K562 (cell line): ENCODE measurements at regions of chr19 and their contacts with region 1.

Region 1: GRCh38 chr19:50537762-50538230 is 24.1 kb upstream of the ASPDH start:
- DNase-seq: peak; percentile 87 to 93 (median 88)
- ATAC-seq: peak; percentile 99
- H3K4me3 ChIP-seq: no peak overlapping the region
- H3K27ac ChIP-seq: no peak overlapping the region
- H3K4me1 ChIP-seq: peaks cover 0 to 5% of the 10 kb centered on the region in 2 experiments; a peak in 2 of 5 replicates
- H3K27me3 ChIP-seq: peaks cover 0 to under 1% of the 10 kb centered on the region in 2 experiments; a peak in 1 of 5 replicates
- CTCF ChIP-seq: peak; percentile 97 to 99 (median 98)
- EP300 ChIP-seq: no peak
- POLR2A ChIP-seq: no peak
- RAD21 ChIP-seq: peak; percentile 85 to 96

Region 2: GRCh38 chr19:50556282-50557008 is 18.6 kb after region 1 on chr19:
- CTCF ChIA-PET with region 1: interaction called, 4 read pairs
- POLR2A ChIA-PET with region 1: interaction called, 3 read pairs
- in situ Hi-C with region 1: no loop called
- intact Hi-C with region 1: loop called (anchors 1 kb)
- DNase-seq: peak; percentile 91 to 93 (median 92)
- ATAC-seq: peak; percentile 95
- H3K4me3 ChIP-seq: peak overlapping the region; percentile 54
- H3K27ac ChIP-seq: peak overlapping the region; percentile 38; the same call in 2 of the 3 replicates
- H3K4me1 ChIP-seq: peaks cover 18 to 33% of the 10 kb centered on the region in 2 experiments
- H3K27me3 ChIP-seq: peaks cover 0 to 13% of the 10 kb centered on the region in 2 experiments; a peak in 2 of 5 replicates
- CTCF ChIP-seq: peak; percentile 82 to 98 (median 95)
- EP300 ChIP-seq: no peak
- POLR2A ChIP-seq: no peak; the same call in 1 of the 2 replicates
- RAD21 ChIP-seq: peak; percentile 19 to 57; a peak in 2 of 4 replicates

Region 3: DNA sequence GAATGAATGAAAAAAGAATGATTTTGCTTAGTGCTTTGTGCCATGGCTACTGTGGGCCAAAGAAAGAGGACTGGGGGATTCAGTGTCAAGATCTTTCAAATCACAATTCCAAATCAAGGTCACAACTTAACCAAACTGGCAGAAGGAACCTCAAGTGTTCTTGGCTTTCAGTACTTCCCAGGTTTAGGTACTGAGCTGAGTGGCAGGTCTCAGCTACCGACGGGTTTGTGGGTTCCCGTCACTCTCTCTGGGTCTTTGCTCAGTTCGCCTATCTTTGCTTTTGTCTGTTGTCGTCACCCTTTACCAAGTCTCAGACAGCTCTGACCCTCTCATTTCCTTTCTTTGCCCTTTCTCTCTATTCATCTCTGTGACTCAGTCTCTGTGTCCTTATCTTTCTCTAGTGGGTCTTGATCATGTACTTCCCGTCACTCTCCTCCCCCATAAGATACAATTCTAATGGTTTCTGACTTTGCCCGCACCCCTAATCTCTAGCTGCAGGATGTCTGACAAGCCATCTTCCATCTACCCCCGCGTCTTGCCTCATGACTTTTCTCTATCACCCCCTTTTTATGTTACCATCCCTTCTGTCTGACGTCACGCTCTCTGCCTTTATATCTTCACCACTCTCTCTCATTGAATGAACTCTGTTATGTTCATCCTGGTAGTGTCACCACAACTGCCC is 63.8 kb after region 1 on chr19:
- CTCF ChIA-PET with region 1: no interaction called
- POLR2A ChIA-PET with region 1: no interaction called
- in situ Hi-C with region 1: no loop called
- intact Hi-C with region 1: loop called (anchors 5 kb)
- DNase-seq: peak; percentile 75 to 94 (median 82)
- ATAC-seq: peak; percentile 67
- H3K4me3 ChIP-seq: no peak overlapping the region
- H3K27ac ChIP-seq: peak overlapping the region; percentile 77
- H3K4me1 ChIP-seq: peaks cover 28 to 39% of the 10 kb centered on the region in 2 experiments
- H3K27me3 ChIP-seq: no peaks in the 10 kb centered on the region
- CTCF ChIP-seq: no peak
- EP300 ChIP-seq: peak; percentile 97
- POLR2A ChIP-seq: no peak
- RAD21 ChIP-seq: peak; percentile 16 to 29; a peak in 1 of 4 replicates

Region 4: GRCh38 chr19:50657712-50658440 is 120.1 kb after region 1 on chr19:
- CTCF ChIA-PET with region 1: interaction called, 5 read pairs
- POLR2A ChIA-PET with region 1: no interaction called
- in situ Hi-C with region 1: no loop called
- intact Hi-C with region 1: loop called (anchors 1 kb)
- DNase-seq: peak; percentile 96 to 100 (median 98)
- ATAC-seq: peak; percentile 88
- H3K4me3 ChIP-seq: peak overlapping the region; percentile 66
- H3K27ac ChIP-seq: peak overlapping the region; percentile 98
- H3K4me1 ChIP-seq: peaks cover 20 to 51% of the 10 kb centered on the region in 2 experiments
- H3K27me3 ChIP-seq: no peaks in the 10 kb centered on the region; a peak in 1 of 5 replicates
- CTCF ChIP-seq: no peak; a peak in 1 of 6 replicates
- EP300 ChIP-seq: no peak; the same call in 1 of the 2 replicates
- POLR2A ChIP-seq: peak; percentile 82; the same call in 1 of the 2 replicates
- RAD21 ChIP-seq: no peak

Region 5: DNA sequence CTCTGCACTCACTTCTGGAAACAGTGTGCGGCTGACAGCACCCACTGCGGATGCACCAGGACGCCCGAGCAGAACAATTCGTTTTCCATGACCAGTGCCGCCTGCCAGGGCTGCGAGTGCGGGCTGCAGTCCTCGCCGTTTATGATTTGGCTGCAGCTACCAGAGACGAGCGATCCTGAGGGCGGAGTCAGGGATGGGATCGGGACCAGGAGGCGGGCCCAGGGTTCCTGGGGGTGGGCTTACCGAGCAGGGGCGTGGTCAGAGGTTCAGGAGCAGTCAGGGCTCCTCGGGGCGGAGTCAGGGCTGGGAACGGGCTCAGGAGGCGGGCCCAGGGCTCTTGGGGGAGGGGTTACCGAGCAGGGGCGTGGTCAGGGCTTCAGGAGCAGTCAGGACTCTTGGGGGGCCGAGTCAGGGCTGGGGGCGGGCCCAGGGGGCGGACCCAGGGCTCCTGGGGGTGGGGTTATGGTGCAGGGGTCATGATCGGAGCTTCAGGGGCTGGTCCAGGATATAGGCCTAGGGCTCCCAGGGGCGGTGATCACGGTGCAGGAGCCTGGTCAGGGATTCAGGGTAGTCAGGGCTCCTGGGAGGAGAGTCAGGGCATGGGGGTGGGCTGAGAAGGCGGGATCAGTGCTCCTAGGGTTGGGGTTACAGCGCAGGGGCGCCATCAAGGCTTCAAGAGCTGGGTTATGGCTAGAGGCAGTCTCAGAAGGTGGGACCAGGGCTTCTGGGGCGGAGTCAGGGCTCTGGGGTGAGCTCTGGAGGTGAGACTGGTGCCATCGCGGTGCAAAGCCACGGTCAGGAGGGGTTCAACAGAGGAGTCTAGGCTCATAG is 371.7 kb after region 1 on chr19:
- CTCF ChIA-PET with region 1: no interaction called
- POLR2A ChIA-PET with region 1: interaction called, 3 read pairs
- in situ Hi-C with region 1: loop called (anchors 10 kb)
- intact Hi-C with region 1: no loop called
- DNase-seq: peak; percentile 93 to 99 (median 98)
- ATAC-seq: peak; percentile 99
- H3K4me3 ChIP-seq: peak overlapping the region; percentile 19; the same call in 1 of the 2 replicates
- H3K27ac ChIP-seq: no peak overlapping the region
- H3K4me1 ChIP-seq: peaks cover 0 to 28% of the 10 kb centered on the region in 2 experiments; a peak in 3 of 5 replicates
- H3K27me3 ChIP-seq: peaks cover 24 to 46% of the 10 kb centered on the region in 2 experiments; a peak in 4 of 5 replicates
- CTCF ChIP-seq: no peak
- EP300 ChIP-seq: no peak
- POLR2A ChIP-seq: no peak
- RAD21 ChIP-seq: no peak

Region 6: DNA sequence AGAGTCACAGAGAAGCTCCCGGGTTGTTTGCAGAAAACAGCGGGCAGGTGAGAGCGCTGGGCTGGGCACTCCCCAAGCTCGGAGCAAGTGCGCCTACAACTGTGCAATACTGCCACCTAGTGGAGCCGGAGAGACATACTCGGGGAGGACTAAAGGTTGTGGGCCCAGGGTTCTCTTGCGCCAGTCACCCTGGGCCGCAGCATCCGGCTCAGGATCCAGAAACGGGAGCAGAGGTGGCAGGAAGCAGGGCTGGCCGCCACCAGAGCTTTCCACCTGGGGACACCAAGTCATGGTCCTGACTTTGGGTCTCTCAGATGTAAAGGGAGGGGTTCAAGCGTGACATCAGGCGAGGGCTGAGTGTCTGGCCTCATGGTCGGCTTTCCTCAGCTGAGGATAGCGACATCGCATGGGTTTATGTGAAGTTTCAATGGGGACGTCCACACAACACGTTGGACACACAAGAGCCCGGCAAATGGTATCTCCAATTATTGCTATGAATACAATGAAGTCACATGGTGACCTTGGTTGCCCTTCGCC is 384.6 kb after region 1 on chr19:
- CTCF ChIA-PET with region 1: no interaction called
- POLR2A ChIA-PET with region 1: no interaction called
- in situ Hi-C with region 1: loop called (anchors 10 kb)
- intact Hi-C with region 1: loop called (anchors 5 kb)
- DNase-seq: peak; percentile 84 to 89 (median 87)
- ATAC-seq: peak; percentile 100
- H3K4me3 ChIP-seq: no peak overlapping the region
- H3K27ac ChIP-seq: no peak overlapping the region
- H3K4me1 ChIP-seq: no peaks in the 10 kb centered on the region
- H3K27me3 ChIP-seq: peaks cover 6 to 23% of the 10 kb centered on the region in 2 experiments; a peak in 3 of 5 replicates
- CTCF ChIP-seq: peak; percentile 88 to 92 (median 91)
- EP300 ChIP-seq: no peak
- POLR2A ChIP-seq: no peak
- RAD21 ChIP-seq: peak; percentile 83 to 89